IMR-90 (cell line): ENCODE measurements at regions of chr5 and their contacts with region 1.

Region 1: DNA sequence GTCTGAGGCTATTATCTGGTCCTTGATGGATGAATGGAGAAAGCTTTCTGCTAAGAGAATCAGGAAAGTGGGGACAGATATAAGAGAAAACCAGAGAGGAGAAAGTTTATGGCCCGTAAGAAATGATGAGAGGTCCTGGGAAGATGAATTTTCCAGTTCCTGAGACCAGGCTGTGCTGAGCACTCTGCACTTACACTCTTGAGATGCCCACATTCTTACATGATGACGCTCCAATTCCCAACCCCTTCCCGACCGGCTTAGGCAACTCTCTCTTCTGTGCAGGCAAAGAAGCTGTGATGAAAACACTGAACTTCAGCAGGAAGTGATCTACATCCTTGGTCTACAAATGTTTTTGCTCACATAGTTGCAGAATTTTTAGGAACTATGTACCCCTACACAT is 417.0 kb downstream of the ARHGEF28 start:
- DNase-seq: peak; percentile 81
- ATAC-seq: peak; percentile 95
- H3K4me3 ChIP-seq: no peak overlapping the region
- H3K27ac ChIP-seq: no peak overlapping the region
- H3K4me1 ChIP-seq: peaks cover 3% of the 10 kb centered on the region; the same call in 1 of the 2 replicates
- H3K27me3 ChIP-seq: no peaks in the 10 kb centered on the region
- CTCF ChIP-seq: no peak
- POLR2A ChIP-seq: no peak
- RAD21 ChIP-seq: no peak

Region 2: DNA sequence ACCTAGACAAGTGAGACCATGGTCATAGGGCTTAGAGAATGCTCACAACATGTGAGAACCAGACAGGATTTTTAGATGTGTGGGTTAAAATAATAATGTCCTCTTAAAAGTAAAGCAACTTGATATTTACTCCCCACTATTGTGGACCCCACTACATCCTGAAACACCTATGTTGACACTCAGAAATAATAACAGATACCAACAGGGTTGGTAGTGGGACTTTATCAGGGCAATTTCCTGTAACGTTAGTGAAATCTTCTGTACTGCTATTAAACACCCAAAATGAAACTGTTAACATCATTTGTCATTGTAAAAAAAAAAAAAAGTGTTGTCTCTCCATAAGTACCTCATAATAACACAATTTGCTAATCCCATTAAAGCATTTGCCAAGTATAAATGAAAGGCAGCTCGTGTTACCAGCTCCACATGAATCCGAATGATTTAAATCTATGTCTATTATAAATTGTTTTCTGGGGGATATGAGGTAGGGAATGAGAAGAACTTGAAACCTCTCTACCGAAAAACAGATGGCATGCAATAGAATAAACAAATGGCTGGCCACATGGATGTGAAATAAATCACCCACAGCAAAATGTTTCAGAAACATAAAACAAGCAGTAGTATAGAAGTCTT is 131.1 kb before region 1 on chr5:
- CTCF ChIA-PET with region 1: no interaction called
- POLR2A ChIA-PET with region 1: no interaction called
- dilution Hi-C with region 1: no loop called
- in situ Hi-C with region 1: no loop called
- intact Hi-C with region 1: no loop called
- DNase-seq: peak; percentile 41
- ATAC-seq: peak; percentile 63
- H3K4me3 ChIP-seq: no peak overlapping the region
- H3K27ac ChIP-seq: no peak overlapping the region
- H3K4me1 ChIP-seq: peaks cover 4% of the 10 kb centered on the region; the same call in 1 of the 2 replicates
- H3K27me3 ChIP-seq: no peaks in the 10 kb centered on the region
- CTCF ChIP-seq: no peak
- POLR2A ChIP-seq: no peak
- RAD21 ChIP-seq: no peak

Region 3: GRCh38 chr5:74476046-74476818 is 433.3 kb after region 1 on chr5:
- CTCF ChIA-PET with region 1: no interaction called
- POLR2A ChIA-PET with region 1: no interaction called
- dilution Hi-C with region 1: no loop called
- in situ Hi-C with region 1: no loop called
- intact Hi-C with region 1: no loop called
- DNase-seq: no peak
- ATAC-seq: no peak
- H3K4me3 ChIP-seq: no peak overlapping the region
- H3K27ac ChIP-seq: no peak overlapping the region
- H3K4me1 ChIP-seq: no peaks in the 10 kb centered on the region
- H3K27me3 ChIP-seq: peaks cover 7% of the 10 kb centered on the region
- CTCF ChIP-seq: no peak
- POLR2A ChIP-seq: no peak
- RAD21 ChIP-seq: no peak

Region 4: DNA sequence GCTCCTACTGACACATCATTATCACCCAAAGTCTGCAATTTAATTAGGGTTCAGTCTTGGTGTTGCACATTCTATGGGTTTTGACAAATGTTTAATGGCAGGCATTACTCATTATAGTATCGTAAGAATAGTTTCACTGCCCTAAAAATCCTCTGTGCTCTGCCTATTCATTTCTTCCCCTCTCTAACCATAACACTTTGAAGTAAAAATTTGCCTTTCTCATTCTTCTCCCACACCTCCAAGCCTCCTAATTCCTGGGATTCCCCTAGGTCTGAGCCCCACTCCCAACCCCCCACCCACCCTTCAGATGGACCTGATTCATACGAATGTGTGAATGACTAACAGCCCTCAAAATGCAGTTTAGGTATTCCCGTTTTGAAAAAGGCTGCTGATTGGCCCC is 579.2 kb after region 1 on chr5:
- CTCF ChIA-PET with region 1: interaction called, 10 read pairs
- POLR2A ChIA-PET with region 1: no interaction called
- dilution Hi-C with region 1: no loop called
- in situ Hi-C with region 1: no loop called
- intact Hi-C with region 1: no loop called
- DNase-seq: no peak
- ATAC-seq: no peak
- H3K4me3 ChIP-seq: no peak overlapping the region
- H3K27ac ChIP-seq: no peak overlapping the region
- H3K4me1 ChIP-seq: no peaks in the 10 kb centered on the region; the same call in 1 of the 2 replicates
- H3K27me3 ChIP-seq: peaks cover 1% of the 10 kb centered on the region; the same call in 1 of the 2 replicates
- CTCF ChIP-seq: no peak
- POLR2A ChIP-seq: no peak
- RAD21 ChIP-seq: no peak

Region 5: DNA sequence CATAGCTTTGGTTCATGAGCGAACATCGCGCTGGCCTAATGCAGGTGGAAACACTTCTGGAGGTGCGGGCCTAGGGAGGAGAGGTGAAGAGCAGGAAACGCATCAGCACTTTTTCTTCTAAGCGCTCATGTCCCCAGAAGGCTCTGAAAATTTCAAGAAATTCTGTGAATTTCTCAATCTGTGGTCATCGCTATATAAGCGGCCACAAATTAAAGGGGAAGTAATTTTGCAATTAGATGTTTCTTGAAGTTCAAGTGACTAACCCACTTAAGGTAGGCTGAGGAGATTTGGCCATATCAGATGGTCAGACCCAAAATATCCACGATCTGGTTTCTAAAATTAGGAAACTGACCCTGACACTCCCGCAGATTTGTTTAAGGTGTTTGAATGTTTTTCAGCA is 1277.4 kb after region 1 on chr5:
- CTCF ChIA-PET with region 1: no interaction called
- POLR2A ChIA-PET with region 1: interaction called, 12 read pairs
- dilution Hi-C with region 1: no loop called
- in situ Hi-C with region 1: no loop called
- intact Hi-C with region 1: no loop called
- DNase-seq: no peak
- ATAC-seq: no peak
- H3K4me3 ChIP-seq: no peak overlapping the region
- H3K27ac ChIP-seq: no peak overlapping the region
- H3K4me1 ChIP-seq: peaks cover 4% of the 10 kb centered on the region
- H3K27me3 ChIP-seq: no peaks in the 10 kb centered on the region; the same call in 1 of the 2 replicates
- CTCF ChIP-seq: no peak
- POLR2A ChIP-seq: no peak
- RAD21 ChIP-seq: no peak